ENCODE measurements at regions of chr10 and their contacts with region 1.

Region 1: GRCh38 chr10:114188001-114188400 is 8.8 kb downstream of the TDRD1 start:
- DNase-seq: no peak
- ATAC-seq: no peak
- H3K4me3 ChIP-seq: no peak overlapping the region
- H3K27ac ChIP-seq: no peak overlapping the region
- H3K4me1 ChIP-seq: no peaks in the 10 kb centered on the region
- H3K27me3 ChIP-seq: peaks cover 2% of the 10 kb centered on the region; the same call in 1 of the 2 replicates
- CTCF ChIP-seq: no peak
- POLR2A ChIP-seq: no peak
- RAD21 ChIP-seq: no peak

Region 2: DNA sequence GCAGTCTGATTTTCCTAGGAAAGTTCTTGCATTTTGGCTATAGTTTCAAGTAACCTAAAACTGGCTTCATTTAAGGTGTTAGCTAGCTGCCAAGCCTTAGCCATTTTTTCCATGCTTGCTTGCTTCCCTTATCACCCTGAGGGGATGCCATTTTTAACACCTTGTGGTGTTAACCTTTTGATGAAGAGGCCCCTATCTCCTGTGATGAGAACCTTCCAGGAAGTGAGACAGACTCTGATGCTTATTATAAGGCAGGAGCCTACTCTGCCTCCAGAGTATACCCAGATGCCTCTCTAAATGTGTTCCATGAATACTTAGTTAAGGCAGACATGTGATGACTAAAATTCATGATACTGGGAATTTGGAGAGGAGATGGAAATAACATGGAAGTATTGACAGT is 46.1 kb after region 1 on chr10:
- CTCF ChIA-PET with region 1: no interaction called
- POLR2A ChIA-PET with region 1: no interaction called
- dilution Hi-C with region 1: no loop called
- in situ Hi-C with region 1: no loop called
- intact Hi-C with region 1: loop called (anchors 5 kb)
- DNase-seq: no peak
- ATAC-seq: no peak
- H3K4me3 ChIP-seq: no peak overlapping the region
- H3K27ac ChIP-seq: no peak overlapping the region
- H3K4me1 ChIP-seq: no peaks in the 10 kb centered on the region
- H3K27me3 ChIP-seq: peaks cover 40% of the 10 kb centered on the region
- CTCF ChIP-seq: no peak
- POLR2A ChIP-seq: no peak
- RAD21 ChIP-seq: no peak